Colonic mucosa (tissue), 4 donors: ENCODE measurements at regions of chr12 and their contacts with region 1.

Region 1: DNA sequence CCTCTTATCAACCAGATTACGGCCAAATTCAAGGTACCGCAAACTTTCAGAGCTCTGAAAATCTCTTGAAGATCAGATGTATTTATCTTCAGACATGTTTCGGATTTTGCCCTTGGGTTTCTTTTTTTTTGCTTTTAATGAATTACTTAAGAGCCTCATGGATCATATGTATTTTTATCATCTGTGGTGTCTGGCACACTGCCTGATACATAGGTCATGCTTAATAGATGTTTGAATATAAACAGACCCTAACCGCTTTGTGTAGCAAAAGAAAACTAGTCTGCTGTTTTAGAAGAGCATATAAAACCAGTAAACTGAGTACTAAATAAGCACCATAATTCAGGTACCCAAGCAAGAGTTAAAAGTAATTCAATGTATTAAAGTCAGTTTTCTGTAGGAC is 20.1 kb upstream of the TBK1 start:
- DNase-seq: no peak
- H3K4me3 ChIP-seq: no peak overlapping the region
- H3K27ac ChIP-seq: no peak overlapping the region
- H3K4me1 ChIP-seq: no peaks in the 10 kb centered on the region
- H3K27me3 ChIP-seq: no peaks in the 10 kb centered on the region
- CTCF ChIP-seq: no peak

Region 2: GRCh38 chr12:64494998-64495729 is 63.4 kb after region 1 on chr12:
- intact Hi-C with region 1: loop called (anchors 10 kb)
- DNase-seq: no peak
- H3K4me3 ChIP-seq: no peak overlapping the region
- H3K27ac ChIP-seq: no peak overlapping the region
- H3K4me1 ChIP-seq: no peaks in the 10 kb centered on the region
- H3K27me3 ChIP-seq: no peaks in the 10 kb centered on the region
- CTCF ChIP-seq: no peak